ENCODE measurements at regions of chr19 and their contacts with region 1.

Region 1: DNA sequence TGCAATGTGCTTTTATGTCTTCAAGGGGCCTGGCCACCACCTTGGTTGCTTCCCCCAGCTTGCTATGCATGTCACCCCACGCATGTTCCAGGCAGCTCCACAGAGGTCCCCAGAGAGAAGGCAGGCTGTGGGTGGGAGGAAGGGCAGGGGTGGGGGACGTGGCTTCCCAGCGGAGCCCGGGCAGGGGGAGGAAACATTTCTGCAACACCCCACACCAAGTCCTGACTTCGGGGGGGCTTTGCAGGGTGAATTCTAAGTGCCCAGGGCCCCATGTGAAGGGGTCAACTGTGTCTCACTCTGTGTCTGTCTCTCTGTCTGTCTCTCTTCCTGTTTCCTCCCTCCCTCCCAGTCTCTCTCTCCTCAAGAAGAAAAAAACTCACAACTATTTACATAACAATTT is 39.6 kb downstream of the LTBP4 start:
- DNase-seq: no peak
- H3K4me3 ChIP-seq: no peak overlapping the region
- H3K27ac ChIP-seq: no peak overlapping the region
- H3K4me1 ChIP-seq: peaks cover 0 to 3% of the 10 kb centered on the region in 2 experiments; a peak in 2 of 4 replicates
- H3K27me3 ChIP-seq: no peaks in the 10 kb centered on the region
- CTCF ChIP-seq: no peak
- EP300 ChIP-seq: no peak
- RAD21 ChIP-seq: no peak

Region 2: GRCh38 chr19:40560092-40560507 is 80.6 kb before region 1 on chr19:
- CTCF ChIA-PET with region 1: no interaction called
- POLR2A ChIA-PET with region 1: no interaction called
- DNase-seq: no peak
- H3K4me3 ChIP-seq: no peak overlapping the region
- H3K27ac ChIP-seq: no peak overlapping the region
- H3K4me1 ChIP-seq: no peaks in the 10 kb centered on the region
- H3K27me3 ChIP-seq: no peaks in the 10 kb centered on the region; the same call in 1 of the 2 replicates
- CTCF ChIP-seq: no peak
- EP300 ChIP-seq: no peak
- RAD21 ChIP-seq: no peak

Region 3: GRCh38 chr19:40570313-40571004 is 70.3 kb before region 1 on chr19:
- CTCF ChIA-PET with region 1: interaction called, 10 read pairs
- POLR2A ChIA-PET with region 1: no interaction called
- DNase-seq: peak; percentile 98
- H3K4me3 ChIP-seq: peak overlapping the region; percentile 58 to 76
- H3K27ac ChIP-seq: peak overlapping the region; percentile 51 to 87; a peak in 3 of 4 replicates
- H3K4me1 ChIP-seq: peaks cover 0 to 9% of the 10 kb centered on the region in 2 experiments; a peak in 1 of 4 replicates
- H3K27me3 ChIP-seq: no peaks in the 10 kb centered on the region
- CTCF ChIP-seq: no peak
- EP300 ChIP-seq: no peak
- RAD21 ChIP-seq: no peak

Region 4: GRCh38 chr19:40588109-40588870 is 52.5 kb before region 1 on chr19:
- CTCF ChIA-PET with region 1: interaction called, 13 read pairs
- POLR2A ChIA-PET with region 1: no interaction called
- DNase-seq: no peak
- H3K4me3 ChIP-seq: no peak overlapping the region
- H3K27ac ChIP-seq: no peak overlapping the region
- H3K4me1 ChIP-seq: no peaks in the 10 kb centered on the region
- H3K27me3 ChIP-seq: no peaks in the 10 kb centered on the region
- CTCF ChIP-seq: no peak
- EP300 ChIP-seq: no peak
- RAD21 ChIP-seq: no peak

Region 5: GRCh38 chr19:40609561-40610395 is 31.0 kb before region 1 on chr19:
- CTCF ChIA-PET with region 1: interaction called, 176 read pairs
- POLR2A ChIA-PET with region 1: no interaction called
- DNase-seq: peak; percentile 99
- H3K4me3 ChIP-seq: peak overlapping the region; percentile 53 to 56
- H3K27ac ChIP-seq: peak overlapping the region in 1 of 2 experiments; percentile 93; a peak in 2 of 4 replicates
- H3K4me1 ChIP-seq: peaks cover 12 to 38% of the 10 kb centered on the region in 2 experiments; a peak in 2 of 4 replicates
- H3K27me3 ChIP-seq: no peaks in the 10 kb centered on the region
- CTCF ChIP-seq: no peak
- EP300 ChIP-seq: no peak
- RAD21 ChIP-seq: no peak

Region 6: GRCh38 chr19:40650749-40651305 is 10.1 kb after region 1 on chr19:
- CTCF ChIA-PET with region 1: interaction called, 10 read pairs
- POLR2A ChIA-PET with region 1: no interaction called
- DNase-seq: no peak
- H3K4me3 ChIP-seq: no peak overlapping the region
- H3K27ac ChIP-seq: no peak overlapping the region
- H3K4me1 ChIP-seq: peaks cover 0 to under 1% of the 10 kb centered on the region in 2 experiments; a peak in 1 of 4 replicates
- H3K27me3 ChIP-seq: no peaks in the 10 kb centered on the region
- CTCF ChIP-seq: no peak
- EP300 ChIP-seq: no peak
- RAD21 ChIP-seq: no peak

Region 7: GRCh38 chr19:40658031-40658430 is 17.3 kb after region 1 on chr19:
- CTCF ChIA-PET with region 1: interaction called, 12 read pairs
- POLR2A ChIA-PET with region 1: interaction called, 5 read pairs
- DNase-seq: no peak
- H3K4me3 ChIP-seq: no peak overlapping the region
- H3K27ac ChIP-seq: no peak overlapping the region
- H3K4me1 ChIP-seq: no peaks in the 10 kb centered on the region
- H3K27me3 ChIP-seq: no peaks in the 10 kb centered on the region
- CTCF ChIP-seq: no peak
- EP300 ChIP-seq: no peak
- RAD21 ChIP-seq: no peak

Region 8: DNA sequence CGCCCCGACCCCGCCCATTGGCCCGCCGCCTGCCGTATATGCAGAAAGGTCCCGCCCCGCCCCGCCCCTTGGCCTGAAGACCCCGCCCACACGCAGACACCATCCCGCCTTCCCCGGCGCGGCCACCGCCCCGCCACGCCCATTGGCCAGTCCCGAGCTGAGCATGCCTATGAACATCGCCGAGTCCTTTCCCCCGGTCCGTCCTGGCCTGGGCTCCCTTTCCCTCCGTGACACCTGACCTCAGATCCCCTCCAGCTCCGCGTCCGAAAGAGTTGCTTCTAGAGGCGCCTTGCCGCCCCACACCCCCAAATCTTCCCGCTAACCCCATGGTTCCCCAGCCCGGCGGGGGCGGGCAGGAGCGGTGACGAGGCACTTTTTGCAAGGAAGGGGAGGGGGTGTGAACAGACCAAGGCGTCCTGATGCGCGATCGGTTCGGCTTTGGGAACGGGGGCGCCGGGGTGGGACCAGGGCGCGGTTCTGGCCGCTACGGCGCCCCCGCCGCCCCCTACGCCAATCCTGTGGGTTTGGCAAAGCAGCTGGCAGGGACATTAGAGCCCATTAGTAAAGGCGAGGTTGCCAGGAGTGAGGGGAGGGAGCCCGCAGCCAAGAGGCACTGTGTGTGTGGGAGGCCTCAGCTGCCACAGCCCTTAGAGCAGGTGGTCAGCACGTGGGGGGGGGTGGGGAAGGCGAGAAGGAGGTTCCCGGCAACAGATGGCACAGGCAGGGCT is 50.1 kb after region 1 on chr19:
- CTCF ChIA-PET with region 1: no interaction called
- POLR2A ChIA-PET with region 1: no interaction called
- DNase-seq: peak; percentile 83
- H3K4me3 ChIP-seq: peak overlapping the region; percentile 69 to 71
- H3K27ac ChIP-seq: peak overlapping the region; percentile 88 to 90
- H3K4me1 ChIP-seq: peaks cover 9 to 28% of the 10 kb centered on the region in 2 experiments; a peak in 2 of 4 replicates
- H3K27me3 ChIP-seq: no peaks in the 10 kb centered on the region
- CTCF ChIP-seq: no peak
- EP300 ChIP-seq: no peak
- RAD21 ChIP-seq: no peak